Activated B cell treated with CpG ODN at 0.5 μM for 24 hours (primary cell): ENCODE measurements at regions of chr7 and their contacts with region 1.

Region 1: DNA sequence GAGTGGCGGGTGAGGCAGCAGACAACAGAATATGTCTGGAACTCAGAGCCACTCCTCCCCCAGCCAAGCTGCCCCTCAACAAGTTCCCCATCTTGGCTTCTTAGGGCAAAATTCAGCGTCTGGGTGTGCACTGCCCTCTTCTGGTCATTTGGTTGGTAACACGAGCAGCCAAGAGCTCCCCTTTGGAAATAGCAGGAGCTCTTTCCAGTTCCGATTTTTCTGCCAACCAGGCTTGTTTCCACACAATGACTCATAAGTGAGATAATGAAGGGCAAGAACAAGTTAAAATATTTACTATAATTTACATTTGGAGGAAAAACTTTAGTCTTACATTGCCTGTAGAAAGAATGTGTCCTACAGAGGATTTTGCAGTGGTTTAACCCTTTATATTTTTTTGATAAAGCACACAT is 70.5 kb downstream of the ADCYAP1R1 start:
- DNase-seq: no peak
- ATAC-seq: no peak
- H3K4me3 Mint-ChIP-seq: no peak overlapping the region
- H3K27ac Mint-ChIP-seq: no peak overlapping the region
- H3K4me1 Mint-ChIP-seq: no peaks in the 10 kb centered on the region
- H3K27me3 Mint-ChIP-seq: peaks cover 3% of the 10 kb centered on the region
- CTCF ChIP-seq: no peak

Region 2: DNA sequence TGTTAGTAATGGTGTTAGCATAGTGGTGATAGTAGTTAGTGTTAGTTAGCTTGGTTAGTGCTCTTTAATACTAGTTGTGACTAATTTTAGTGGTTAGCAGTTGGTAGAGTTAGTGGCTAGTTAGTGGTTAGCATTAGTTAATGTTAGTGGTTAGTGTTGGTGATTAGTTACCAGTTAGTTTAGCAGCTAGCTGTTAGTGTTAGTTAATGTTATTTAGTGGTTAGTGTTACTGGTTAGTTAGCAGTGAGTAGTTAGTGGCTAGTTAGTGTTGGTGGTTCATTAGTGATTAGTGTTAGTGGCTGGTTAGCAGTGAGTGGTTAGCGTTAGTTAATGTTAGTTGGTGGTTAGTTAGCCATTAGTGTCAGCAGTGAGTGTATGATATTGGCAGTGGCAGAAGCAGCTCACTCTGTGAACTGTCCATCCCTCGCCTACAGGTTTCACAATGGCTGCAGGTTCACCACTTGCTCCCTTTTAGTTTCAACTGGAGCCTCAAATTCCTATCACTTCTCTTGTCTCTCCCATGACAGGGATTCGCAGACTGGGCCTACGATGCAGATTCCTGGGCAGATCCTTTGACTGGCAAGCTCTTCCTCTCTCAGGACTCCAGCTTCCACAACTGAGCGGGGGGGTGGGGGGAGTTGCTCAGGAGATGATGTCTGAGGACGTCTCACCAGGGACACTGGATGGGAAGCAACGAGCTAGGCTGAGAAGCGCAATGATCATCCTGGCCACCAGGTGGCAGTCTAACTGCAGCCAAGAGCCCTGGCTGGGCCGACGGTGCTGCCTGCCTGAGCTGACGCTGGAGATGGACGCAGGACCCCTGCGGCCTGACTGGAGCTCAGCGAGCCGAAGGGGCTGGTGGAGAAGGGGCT is 139.4 kb before region 1 on chr7:
- CTCF ChIA-PET with region 1: interaction called, 22 read pairs
- POLR2A ChIA-PET with region 1: interaction called, 3 read pairs
- intact Hi-C with region 1: loop called (anchors 1 kb)
- DNase-seq: peak; percentile 60
- ATAC-seq: peak; percentile 82
- H3K4me3 Mint-ChIP-seq: no peak overlapping the region
- H3K27ac Mint-ChIP-seq: no peak overlapping the region
- H3K4me1 Mint-ChIP-seq: peaks cover 2% of the 10 kb centered on the region
- H3K27me3 Mint-ChIP-seq: peaks cover 36% of the 10 kb centered on the region
- CTCF ChIP-seq: peak; percentile 96

Region 3: DNA sequence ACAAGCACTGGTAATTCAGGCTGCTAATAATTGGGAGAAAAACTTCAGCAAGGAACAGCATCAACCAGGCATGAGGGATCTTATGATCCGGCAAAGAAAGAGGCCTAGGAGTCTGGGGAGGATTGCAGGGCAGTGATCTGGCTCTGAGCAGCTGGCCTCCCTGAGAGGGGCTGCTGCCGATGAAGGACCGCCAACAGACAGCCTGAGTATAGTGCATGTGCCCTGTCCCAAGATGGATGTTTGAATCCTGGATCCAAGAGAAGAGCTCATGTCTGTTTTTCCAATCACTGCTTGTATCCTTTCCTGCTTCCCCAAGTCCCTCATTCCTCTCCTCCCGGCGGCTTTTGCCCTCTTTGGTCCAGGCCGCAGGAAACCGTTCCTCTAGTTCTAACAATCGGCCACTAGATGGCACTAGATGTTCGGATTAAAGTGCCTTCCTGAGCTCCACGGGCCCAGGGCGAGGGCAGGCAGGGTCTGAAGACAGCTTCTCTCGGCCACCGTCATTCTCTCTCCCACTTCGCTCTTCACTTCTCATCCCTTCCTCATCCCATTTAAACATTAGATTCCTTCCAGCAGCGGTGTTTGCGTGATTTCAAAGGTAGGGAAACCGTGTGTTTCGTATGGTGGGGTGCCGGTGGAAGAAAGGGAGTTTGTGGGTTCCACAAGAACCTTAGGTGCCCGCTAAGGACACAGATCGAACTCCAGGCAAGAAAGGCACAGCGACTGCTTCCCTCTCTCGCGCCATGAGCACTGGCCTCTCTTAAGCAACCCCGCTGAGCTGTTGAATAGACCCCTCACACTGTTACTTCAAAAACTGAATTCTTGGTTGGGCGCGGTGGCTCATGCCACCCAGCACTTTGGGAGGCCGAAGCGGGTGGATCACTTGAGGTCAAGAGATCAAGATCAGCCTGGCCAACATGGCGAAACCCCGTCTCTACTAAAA is 11.9 kb after region 1 on chr7:
- CTCF ChIA-PET with region 1: interaction called, 25 read pairs
- POLR2A ChIA-PET with region 1: no interaction called
- intact Hi-C with region 1: no loop called
- DNase-seq: peak; percentile 18
- ATAC-seq: peak; percentile 52
- H3K4me3 Mint-ChIP-seq: no peak overlapping the region
- H3K27ac Mint-ChIP-seq: no peak overlapping the region
- H3K4me1 Mint-ChIP-seq: no peaks in the 10 kb centered on the region
- H3K27me3 Mint-ChIP-seq: peaks cover 4% of the 10 kb centered on the region
- CTCF ChIP-seq: no peak